ENCODE measurements at regions of chr9 and their contacts with region 1.

Region 1: DNA sequence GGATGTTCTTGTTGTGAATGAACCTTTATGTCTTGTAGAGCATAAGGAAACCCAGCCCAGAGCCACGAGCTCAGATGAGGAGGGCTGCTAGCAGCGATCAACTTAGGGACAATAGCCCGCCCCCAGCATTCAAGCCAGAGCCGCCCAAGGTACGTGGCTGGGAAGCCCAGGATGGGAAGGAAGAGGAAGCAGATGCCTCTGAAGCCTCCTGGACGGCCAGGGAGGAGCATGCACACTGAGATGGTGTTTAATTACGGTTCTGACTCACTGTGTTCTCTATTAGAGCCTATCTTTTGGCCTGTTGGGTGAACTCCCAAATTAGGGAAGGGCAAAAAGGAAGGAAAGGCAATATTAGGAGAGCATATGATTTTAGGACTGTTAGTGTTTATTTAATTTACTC is 75.3 kb downstream of the TJP2 start:
- DNase-seq: no peak
- H3K4me3 ChIP-seq: no peak overlapping the region
- H3K27ac ChIP-seq: no peak overlapping the region
- H3K27me3 ChIP-seq: no peaks in the 10 kb centered on the region
- CTCF ChIP-seq: no peak

Region 2: GRCh38 chr9:69307446-69308216 is 58.3 kb after region 1 on chr9:
- intact Hi-C with region 1: loop called in 1 of 2 experiments (anchors 5 kb)
- DNase-seq: no peak
- H3K4me3 ChIP-seq: no peak overlapping the region
- H3K27ac ChIP-seq: peak overlapping the region in 9 of 59 donors; percentile 3 to 57 (median 22)
- H3K27me3 ChIP-seq: no peaks in the 10 kb centered on the region
- CTCF ChIP-seq: no peak